ENCODE measurements at regions of chr3 and their contacts with region 1.

Region 1: DNA sequence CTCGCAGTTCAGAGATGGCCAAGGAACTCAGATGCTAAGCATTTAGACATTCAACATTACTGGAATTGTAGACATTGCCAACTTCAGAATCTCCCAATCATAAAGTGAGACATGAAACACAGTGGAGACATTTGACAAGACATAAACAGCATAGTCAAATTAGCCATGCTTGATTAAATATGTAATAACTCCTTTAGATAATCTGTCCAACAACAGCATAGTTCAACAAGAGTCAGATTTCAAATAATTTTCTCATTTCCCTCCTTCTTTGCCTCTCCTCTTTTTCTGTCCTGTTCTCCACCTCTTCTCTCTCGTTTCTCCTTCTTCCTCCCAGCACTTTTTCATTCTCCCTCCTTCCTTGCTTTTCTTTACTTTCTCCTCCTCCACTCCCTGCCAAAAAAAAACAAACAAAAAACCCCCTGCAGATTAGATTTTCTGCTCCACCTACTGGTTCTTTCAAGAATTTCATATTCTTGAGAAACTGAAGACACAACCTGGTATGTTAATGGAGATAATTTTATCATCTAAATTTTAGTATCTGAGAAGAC is 20.2 kb downstream of the CPOX start:
- DNase-seq: no peak
- H3K4me3 Mint-ChIP-seq: peak overlapping the region; percentile 47
- H3K27ac Mint-ChIP-seq: peak overlapping the region; percentile 71
- H3K4me1 Mint-ChIP-seq: peaks cover 57% of the 10 kb centered on the region
- H3K27me3 Mint-ChIP-seq: no peaks in the 10 kb centered on the region

Region 2: DNA sequence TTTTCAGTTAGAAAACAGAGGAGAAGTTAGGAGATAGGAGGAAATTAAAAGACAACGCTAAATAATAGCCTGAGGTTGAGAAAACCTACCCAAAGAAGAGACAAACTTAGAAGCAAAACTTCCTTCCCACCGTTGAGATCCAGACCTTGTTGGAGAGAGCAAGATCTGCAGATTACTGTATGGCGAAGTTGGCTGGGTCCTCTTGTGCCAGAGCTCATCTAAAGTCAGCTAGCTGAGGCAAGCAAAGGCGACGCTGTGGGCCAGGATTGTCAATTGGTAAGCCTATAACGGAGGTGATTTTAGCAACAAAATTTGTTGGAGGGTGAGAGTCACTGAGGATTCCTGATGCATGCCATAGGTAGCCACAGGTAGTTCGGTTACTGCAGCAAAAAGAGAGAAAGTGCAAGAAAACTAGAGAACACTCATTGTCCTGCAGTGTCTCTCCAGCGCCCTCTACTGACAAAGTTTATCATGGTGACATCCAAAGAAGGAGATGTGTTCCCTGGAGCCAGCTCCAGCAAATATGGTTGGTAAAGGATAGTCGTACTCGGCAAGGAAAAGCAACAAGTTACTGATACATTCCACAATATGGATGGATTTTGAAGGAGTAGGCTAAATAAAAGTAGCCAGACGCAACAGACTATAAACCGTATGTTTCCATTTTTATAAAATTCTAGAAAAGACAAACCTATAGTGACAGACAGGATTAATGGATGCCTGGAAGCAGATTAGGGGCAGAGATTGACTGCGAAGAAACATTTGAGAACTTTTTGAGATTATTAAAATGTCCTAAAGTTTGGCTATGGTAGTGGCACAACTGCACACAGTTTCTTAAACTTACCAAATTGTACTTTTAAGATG is 229.4 kb before region 1 on chr3:
- intact Hi-C with region 1: loop called (anchors 5 kb)
- DNase-seq: peak; percentile 20
- H3K4me3 Mint-ChIP-seq: no peak overlapping the region
- H3K27ac Mint-ChIP-seq: no peak overlapping the region
- H3K4me1 Mint-ChIP-seq: peaks cover 6% of the 10 kb centered on the region
- H3K27me3 Mint-ChIP-seq: peaks cover 45% of the 10 kb centered on the region

Region 3: DNA sequence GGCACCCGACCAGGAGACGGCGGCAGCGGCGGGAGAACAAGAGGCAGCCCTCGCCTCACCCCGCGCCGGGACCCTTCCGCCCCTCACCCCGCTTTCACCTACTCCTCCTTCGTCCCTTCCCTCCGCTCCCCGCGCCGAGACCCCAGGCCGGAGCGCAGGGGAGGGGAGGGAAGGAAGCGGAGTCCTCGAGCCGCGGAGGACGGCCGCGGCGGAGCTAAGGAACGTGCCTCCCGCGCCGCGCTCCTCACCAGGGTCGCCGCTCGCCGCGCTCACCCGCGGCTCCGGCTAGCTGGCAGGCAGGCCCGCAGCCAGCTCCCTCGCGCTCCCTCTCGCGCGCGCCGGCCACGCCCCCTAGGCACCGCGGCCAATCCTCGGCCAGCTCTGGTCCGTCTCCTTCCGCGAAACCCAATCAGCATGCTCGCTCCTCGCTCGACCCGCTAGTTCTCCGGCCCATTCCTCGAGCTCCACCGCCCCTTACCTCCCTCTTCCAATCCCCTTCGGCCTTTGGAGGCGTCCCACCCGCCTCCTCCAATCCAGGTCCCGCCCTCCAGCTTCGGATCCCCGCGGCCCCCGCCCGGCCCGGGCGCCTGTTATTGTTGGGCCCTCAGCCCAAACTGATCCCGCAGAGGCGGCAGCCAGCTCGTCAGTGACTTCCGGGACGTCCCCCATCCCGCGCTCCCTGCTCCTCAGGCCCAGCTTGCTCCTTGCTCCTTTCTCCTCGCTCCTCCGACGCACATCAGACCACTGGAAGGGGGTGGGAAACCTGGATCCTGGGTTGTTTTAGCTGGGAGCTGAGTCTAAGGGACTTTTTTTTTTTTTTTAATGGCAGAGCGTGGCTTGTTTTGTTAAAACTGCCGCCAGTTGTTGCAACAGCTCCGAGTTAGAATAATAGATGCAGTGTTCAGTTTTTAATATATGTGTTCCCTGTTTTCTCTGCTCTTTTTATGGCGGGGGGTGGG is 328.4 kb after region 1 on chr3 and contains the start of gene DCBLD2:
- intact Hi-C with region 1: no loop called
- DNase-seq: peak; percentile 95
- H3K4me3 Mint-ChIP-seq: peak within 1 kb of the TSS; percentile 83
- H3K27ac Mint-ChIP-seq: peak within 1 kb of the TSS; percentile 57
- H3K4me1 Mint-ChIP-seq: peaks cover 14% of the 10 kb centered on the region
- H3K27me3 Mint-ChIP-seq: peaks cover 20% of the 10 kb centered on the region
- total RNA-seq, gene DCBLD2: 4.2 and 5.1 TPM in 2 replicates